Sigmoid colon (tissue), 7 donors: ENCODE measurements at regions of chr10 and their contacts with region 1.

Region 1: GRCh38 chr10:94439275-94439861 is 37.0 kb downstream of the TBC1D12 start:
- DNase-seq: no peak
- H3K4me3 ChIP-seq: no peak overlapping the region
- H3K27ac ChIP-seq: no peak overlapping the region
- H3K4me1 ChIP-seq: peaks cover 0 to 18% (median 0%) of the 10 kb centered on the region in 4 donors
- H3K27me3 ChIP-seq: no peaks in the 10 kb centered on the region
- CTCF ChIP-seq: no peak
- EP300 ChIP-seq: no peak
- POLR2A ChIP-seq: no peak

Region 2: DNA sequence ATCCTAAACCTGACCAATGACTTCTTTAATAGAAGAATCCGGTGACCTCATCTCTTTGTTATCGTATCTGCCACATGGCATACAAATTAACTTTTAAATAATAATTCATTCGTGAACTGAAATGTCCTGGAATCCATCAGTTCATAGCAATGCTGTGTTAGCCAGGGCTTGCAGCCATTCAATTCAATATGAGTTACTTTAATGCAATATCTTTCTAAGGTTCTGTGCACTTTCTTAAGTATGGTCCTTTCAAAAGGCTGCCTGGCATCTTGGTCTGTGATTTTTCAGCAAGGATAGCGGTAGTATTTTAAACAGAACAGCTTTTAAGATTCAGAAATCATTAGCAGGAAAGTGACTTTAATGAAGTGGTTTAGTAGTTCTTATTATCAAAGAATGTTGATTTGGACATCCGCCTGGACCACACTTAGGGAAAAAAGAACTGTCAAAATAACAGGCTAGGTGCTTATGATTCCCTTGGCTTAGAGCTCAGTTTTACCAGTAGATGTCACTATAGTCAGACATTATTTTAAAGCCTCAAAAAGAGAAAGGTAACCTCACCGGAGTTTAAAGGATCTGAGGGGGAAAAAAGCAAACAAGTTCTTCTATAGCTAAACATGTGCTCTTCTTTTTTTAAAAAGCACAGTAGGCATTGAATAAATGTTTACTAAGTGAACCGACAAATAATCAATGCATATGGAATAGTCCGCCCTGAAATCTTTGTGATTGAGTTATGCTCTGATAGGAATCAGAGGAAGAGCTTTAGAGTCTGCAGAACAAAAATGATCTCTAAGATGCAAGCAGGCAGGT is 522.9 kb before region 1 on chr10:
- intact Hi-C with region 1: loop called (anchors 10 kb)
- DNase-seq: no peak
- H3K4me3 ChIP-seq: peak overlapping the region in 1 of 4 donors; percentile 8
- H3K27ac ChIP-seq: no peak overlapping the region
- H3K4me1 ChIP-seq: peaks cover 0 to 13% (median 3%) of the 10 kb centered on the region in 4 donors
- H3K27me3 ChIP-seq: no peaks in the 10 kb centered on the region
- CTCF ChIP-seq: peak; percentile 29 to 51 (median 44)
- EP300 ChIP-seq: no peak
- POLR2A ChIP-seq: no peak

Region 3: GRCh38 chr10:94279835-94280709 is 159.3 kb before region 1 on chr10:
- intact Hi-C with region 1: loop called (anchors 5 kb)
- DNase-seq: no peak
- H3K4me3 ChIP-seq: no peak overlapping the region
- H3K27ac ChIP-seq: peak overlapping the region in 2 of 4 donors; percentile 8 to 28
- H3K4me1 ChIP-seq: peaks cover 0 to 19% (median 6%) of the 10 kb centered on the region in 4 donors
- H3K27me3 ChIP-seq: no peaks in the 10 kb centered on the region
- CTCF ChIP-seq: peak; percentile 21 to 81 (median 66)
- EP300 ChIP-seq: no peak
- POLR2A ChIP-seq: no peak

Region 4: GRCh38 chr10:94362360-94363250 is 76.8 kb before region 1 on chr10 and contains the start of gene NOC3L:
- intact Hi-C with region 1: loop called (anchors 2 kb)
- DNase-seq: peak; percentile 97
- H3K4me3 ChIP-seq: peak within 1 kb of the TSS; percentile 57 to 74 (median 65)
- H3K27ac ChIP-seq: peak within 1 kb of the TSS; percentile 75 to 83 (median 76)
- H3K4me1 ChIP-seq: peaks cover 0 to 23% (median 16%) of the 10 kb centered on the region in 4 donors
- H3K27me3 ChIP-seq: no peaks in the 10 kb centered on the region
- CTCF ChIP-seq: peak; percentile 68 to 87 (median 81)
- EP300 ChIP-seq: no peak
- POLR2A ChIP-seq: no peak
- total RNA-seq, gene NOC3L: 14.1 to 17.8 (median 15.9) TPM

Region 5: DNA sequence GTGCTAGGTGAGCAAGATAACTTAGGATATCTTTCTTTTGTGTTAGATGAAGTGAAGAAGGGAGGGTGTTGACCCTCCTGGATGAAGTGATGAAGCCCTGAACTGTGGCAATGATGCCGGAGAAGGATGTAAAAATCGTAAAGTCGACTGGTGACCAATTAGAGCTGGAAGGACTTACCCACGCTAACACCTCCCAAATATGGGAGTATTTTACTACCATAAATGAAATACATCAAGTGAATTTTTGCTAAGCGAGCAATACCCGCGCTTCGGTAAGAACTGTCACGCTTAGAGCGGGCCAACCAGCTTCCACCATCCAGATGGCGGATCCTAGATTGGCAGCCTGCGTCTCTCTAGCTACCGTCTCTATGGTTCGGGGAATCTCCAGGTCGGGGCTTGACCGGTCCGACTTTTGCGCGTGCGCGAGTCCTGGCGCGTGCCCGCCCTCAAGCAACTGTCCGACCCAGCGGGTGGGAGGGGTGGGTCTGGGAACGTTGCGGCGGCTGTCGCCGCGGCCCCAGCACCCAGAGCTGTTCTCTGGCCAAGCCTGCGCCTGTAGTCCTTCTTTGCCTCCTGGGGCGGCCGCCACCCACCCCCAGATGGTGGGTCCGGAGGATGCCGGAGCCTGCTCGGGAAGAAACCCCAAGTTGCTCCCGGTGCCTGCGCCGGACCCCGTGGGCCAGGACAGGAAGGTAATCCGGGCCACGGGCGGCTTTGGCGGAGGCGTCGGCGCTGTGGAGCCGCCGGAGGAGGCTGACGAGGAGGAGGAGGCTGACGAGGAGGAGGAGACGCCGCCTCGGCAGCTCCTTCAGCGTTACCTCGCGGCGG is 37.1 kb before region 1 on chr10 and contains the start of gene TBC1D12:
- intact Hi-C with region 1: loop called (anchors 2 kb)
- DNase-seq: peak; percentile 98
- H3K4me3 ChIP-seq: peak within 1 kb of the TSS; percentile 61 to 91 (median 81)
- H3K27ac ChIP-seq: peak within 1 kb of the TSS; percentile 85 to 98 (median 96)
- H3K4me1 ChIP-seq: peaks cover 0 to 19% (median 14%) of the 10 kb centered on the region in 4 donors
- H3K27me3 ChIP-seq: no peaks in the 10 kb centered on the region
- CTCF ChIP-seq: no peak
- EP300 ChIP-seq: no peak
- POLR2A ChIP-seq: peak; percentile 38 to 64
- total RNA-seq, gene TBC1D12: 16.3 to 24.4 (median 19.1) TPM

Region 6: GRCh38 chr10:94571528-94571927 is 132.2 kb after region 1 on chr10:
- intact Hi-C with region 1: no loop called
- DNase-seq: no peak
- H3K4me3 ChIP-seq: no peak overlapping the region
- H3K27ac ChIP-seq: no peak overlapping the region
- H3K4me1 ChIP-seq: no peaks in the 10 kb centered on the region
- H3K27me3 ChIP-seq: no peaks in the 10 kb centered on the region
- CTCF ChIP-seq: no peak
- EP300 ChIP-seq: no peak
- POLR2A ChIP-seq: no peak